ENCODE measurements at regions of chr20 and their contacts with region 1.

Region 1: GRCh38 chr20:34363062-34363464 is at the start of gene ITCH:
- DNase-seq: peak; percentile 96
- H3K4me3 Mint-ChIP-seq: peak within 1 kb of the TSS; percentile 97
- H3K27ac Mint-ChIP-seq: peak within 1 kb of the TSS; percentile 95
- H3K4me1 Mint-ChIP-seq: peaks cover 34% of the 10 kb centered on the region
- H3K27me3 Mint-ChIP-seq: no peaks in the 10 kb centered on the region
- total RNA-seq, gene ITCH: 35.3 to 40.0 TPM

Region 2: DNA sequence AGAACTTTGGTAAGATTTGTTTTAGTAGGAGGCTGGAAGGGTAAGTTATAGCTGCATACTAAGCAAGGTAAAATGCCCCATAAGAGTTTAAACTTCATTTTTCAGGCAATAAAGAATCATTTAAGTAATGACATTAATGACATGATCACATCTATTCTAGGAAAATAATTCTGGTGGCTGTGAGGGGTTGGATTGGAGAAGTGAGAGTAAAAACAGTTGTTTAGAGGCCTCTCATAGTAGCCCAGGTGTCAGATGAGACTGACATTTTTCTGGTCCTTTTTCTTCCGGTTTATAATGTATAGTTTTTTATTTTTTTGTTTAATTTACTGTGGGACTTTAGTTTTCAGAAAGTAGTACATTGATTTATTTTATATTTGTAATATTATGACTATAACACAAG is 40.8 kb after region 1 on chr20:
- CTCF ChIA-PET with region 1: interaction called, 5 read pairs
- intact Hi-C with region 1: loop called (anchors 1 kb)
- DNase-seq: no peak
- H3K4me3 Mint-ChIP-seq: no peak overlapping the region
- H3K27ac Mint-ChIP-seq: peak overlapping the region; percentile 2
- H3K4me1 Mint-ChIP-seq: peaks cover 52% of the 10 kb centered on the region
- H3K27me3 Mint-ChIP-seq: no peaks in the 10 kb centered on the region

Region 3: DNA sequence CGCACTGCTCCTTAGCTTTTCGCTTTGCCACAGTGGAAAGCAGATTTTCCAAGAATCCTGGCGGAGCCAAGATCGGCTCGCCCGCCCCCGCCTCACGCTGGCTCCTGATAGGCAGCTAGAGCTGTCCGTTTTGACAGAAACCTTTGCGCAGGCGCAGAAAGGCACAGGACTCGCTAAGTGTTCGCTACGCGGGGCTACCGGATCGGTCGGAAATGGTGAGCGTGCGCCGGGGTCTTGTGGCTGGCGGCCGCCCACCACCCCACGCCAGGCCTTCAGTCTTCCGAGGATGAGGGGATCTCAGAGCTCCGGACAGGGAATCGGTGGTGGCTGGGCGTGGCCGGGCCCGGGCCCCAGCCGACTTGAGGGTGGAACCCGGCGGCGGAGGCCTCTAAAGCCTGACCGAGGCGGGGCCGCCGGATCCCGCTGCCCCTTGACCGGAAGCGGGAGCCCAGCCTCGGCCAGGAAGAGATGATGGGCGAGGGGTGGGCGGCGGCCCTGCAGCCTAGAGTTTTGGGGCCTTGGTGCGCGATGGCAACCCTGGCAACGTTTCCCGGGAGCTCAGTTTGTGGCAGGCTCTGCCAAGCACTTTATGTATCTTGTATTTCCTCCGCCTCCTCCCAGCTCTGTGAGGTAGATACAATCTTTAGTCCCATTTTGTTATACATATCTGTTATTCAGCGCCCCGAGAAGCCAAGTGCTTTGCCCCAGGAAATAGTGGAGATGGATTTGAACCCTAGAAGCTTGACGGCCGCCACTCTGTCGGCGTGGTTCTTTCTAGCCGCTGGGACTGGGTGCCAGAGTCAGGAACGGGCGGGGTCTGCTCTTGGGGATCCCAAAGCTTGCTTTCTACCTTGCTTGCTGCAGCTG is 153.4 kb after region 1 on chr20 and contains the start of gene DYNLRB1:
- CTCF ChIA-PET with region 1: no interaction called
- intact Hi-C with region 1: loop called (anchors 1 kb)
- DNase-seq: peak; percentile 96
- H3K4me3 Mint-ChIP-seq: peak within 1 kb of the TSS; percentile 98
- H3K27ac Mint-ChIP-seq: peak within 1 kb of the TSS; percentile 96
- H3K4me1 Mint-ChIP-seq: peaks cover 29% of the 10 kb centered on the region
- H3K27me3 Mint-ChIP-seq: no peaks in the 10 kb centered on the region
- total RNA-seq, gene DYNLRB1: 81.9 to 92.9 TPM

Region 4: DNA sequence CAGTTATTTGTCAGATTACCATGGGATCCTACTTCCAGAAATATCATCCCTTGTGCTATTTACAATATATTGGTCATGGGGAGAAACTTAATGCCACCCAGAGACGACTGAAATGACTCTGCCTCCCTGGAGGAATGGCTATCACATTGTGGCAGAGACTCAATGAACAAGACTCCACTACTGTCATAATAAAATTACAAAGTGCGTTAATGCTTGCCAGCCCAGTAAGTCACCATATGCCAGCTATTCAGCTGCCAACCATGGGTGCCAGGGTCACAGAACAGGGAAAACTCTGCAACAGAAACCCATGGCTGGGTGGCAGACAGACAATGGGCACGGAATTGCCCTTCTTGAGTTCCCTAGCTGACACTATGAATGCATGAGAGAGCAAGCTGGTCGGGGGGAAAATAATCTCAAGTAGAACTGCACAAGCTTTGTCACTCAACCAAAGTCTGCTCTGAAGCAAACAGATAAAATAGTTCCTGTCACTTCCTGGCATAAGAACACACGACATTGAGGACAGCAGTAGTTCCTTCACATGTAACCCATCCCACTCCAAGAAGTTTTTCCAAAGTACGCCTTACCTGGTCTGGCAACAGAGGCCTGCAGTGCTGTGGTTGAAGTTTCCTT is 373.2 kb after region 1 on chr20:
- CTCF ChIA-PET with region 1: no interaction called
- intact Hi-C with region 1: no loop called
- DNase-seq: no peak
- H3K4me3 Mint-ChIP-seq: no peak overlapping the region
- H3K27ac Mint-ChIP-seq: no peak overlapping the region
- H3K4me1 Mint-ChIP-seq: no peaks in the 10 kb centered on the region
- H3K27me3 Mint-ChIP-seq: no peaks in the 10 kb centered on the region

Measured in activated naive CD4-positive, alpha-beta T cell treated with anti-CD3 and anti-CD28 coated beads for 36 hours (primary cell).